Activated B cell treated with CpG ODN at 0.5 μM for 24 hours (primary cell): ENCODE measurements at regions of chr10 and their contacts with region 1.

Region 1: GRCh38 chr10:71319042-71319799 is at the start of gene SLC29A3:
- DNase-seq: peak; percentile 72
- ATAC-seq: peak; percentile 90
- H3K4me3 Mint-ChIP-seq: peak within 1 kb of the TSS; percentile 96
- H3K27ac Mint-ChIP-seq: peak within 1 kb of the TSS; percentile 80
- H3K4me1 Mint-ChIP-seq: peaks cover 13% of the 10 kb centered on the region
- H3K27me3 Mint-ChIP-seq: no peaks in the 10 kb centered on the region
- CTCF ChIP-seq: no peak
- total RNA-seq, gene SLC29A3: 3.1 and 4.3 TPM in 2 replicates

Region 2: GRCh38 chr10:71359364-71360046 is 40.3 kb after region 1 on chr10:
- CTCF ChIA-PET with region 1: no interaction called
- POLR2A ChIA-PET with region 1: interaction called, 4 read pairs
- intact Hi-C with region 1: loop called (anchors 5 kb)
- DNase-seq: no peak
- ATAC-seq: peak; percentile 80
- H3K4me3 Mint-ChIP-seq: no peak overlapping the region
- H3K27ac Mint-ChIP-seq: peak overlapping the region; percentile 72
- H3K4me1 Mint-ChIP-seq: peaks cover 24% of the 10 kb centered on the region
- H3K27me3 Mint-ChIP-seq: no peaks in the 10 kb centered on the region
- CTCF ChIP-seq: no peak

Region 3: GRCh38 chr10:71378336-71379117 is 59.3 kb after region 1 on chr10:
- CTCF ChIA-PET with region 1: interaction called, 41 read pairs
- POLR2A ChIA-PET with region 1: interaction called, 34 read pairs
- intact Hi-C with region 1: loop called (anchors 1 kb)
- DNase-seq: no peak
- ATAC-seq: peak; percentile 20
- H3K4me3 Mint-ChIP-seq: peak overlapping the region; percentile 24
- H3K27ac Mint-ChIP-seq: peak overlapping the region; percentile 67
- H3K4me1 Mint-ChIP-seq: peaks cover 40% of the 10 kb centered on the region
- H3K27me3 Mint-ChIP-seq: no peaks in the 10 kb centered on the region
- CTCF ChIP-seq: no peak

Region 4: DNA sequence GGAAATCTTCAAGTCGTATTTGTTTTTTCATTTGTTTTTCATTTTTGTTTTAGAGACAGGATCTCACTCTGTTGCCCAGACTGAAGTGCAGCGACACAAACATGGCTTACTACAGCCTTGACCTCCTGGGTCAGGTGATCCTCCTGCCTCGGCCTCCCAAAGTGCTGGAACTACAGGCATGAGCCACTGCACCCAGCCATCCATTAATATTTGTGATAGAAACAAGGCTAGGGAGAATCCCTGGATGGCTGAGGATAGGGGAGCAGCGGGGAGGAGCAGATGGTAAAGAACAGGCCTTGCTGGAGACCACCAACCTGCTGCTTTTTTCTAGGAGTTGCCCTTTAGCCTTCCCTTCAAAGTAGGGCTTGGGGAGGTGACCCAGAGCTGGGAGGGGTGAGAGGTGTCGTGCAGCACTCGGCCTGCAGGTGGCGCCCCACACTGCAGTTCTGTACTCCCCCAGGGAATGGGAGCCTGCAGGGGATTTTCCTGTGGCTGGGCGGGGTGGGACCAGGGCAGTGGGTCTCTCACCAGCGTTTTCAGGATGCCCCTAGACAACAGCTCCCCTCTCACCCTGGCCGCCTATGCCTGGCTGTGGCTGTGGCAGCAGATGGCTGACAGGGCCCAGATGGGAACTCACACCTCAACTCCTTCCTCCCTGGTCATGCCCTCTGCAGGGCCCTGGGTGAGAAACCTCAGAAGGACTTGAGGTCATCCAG is 64.9 kb after region 1 on chr10:
- CTCF ChIA-PET with region 1: interaction called, 41 read pairs
- POLR2A ChIA-PET with region 1: interaction called, 7 read pairs
- intact Hi-C with region 1: loop called (anchors 2 kb)
- DNase-seq: peak; percentile 82
- ATAC-seq: peak; percentile 100
- H3K4me3 Mint-ChIP-seq: no peak overlapping the region
- H3K27ac Mint-ChIP-seq: no peak overlapping the region
- H3K4me1 Mint-ChIP-seq: peaks cover 7% of the 10 kb centered on the region
- H3K27me3 Mint-ChIP-seq: peaks cover 3% of the 10 kb centered on the region
- CTCF ChIP-seq: no peak

Region 5: DNA sequence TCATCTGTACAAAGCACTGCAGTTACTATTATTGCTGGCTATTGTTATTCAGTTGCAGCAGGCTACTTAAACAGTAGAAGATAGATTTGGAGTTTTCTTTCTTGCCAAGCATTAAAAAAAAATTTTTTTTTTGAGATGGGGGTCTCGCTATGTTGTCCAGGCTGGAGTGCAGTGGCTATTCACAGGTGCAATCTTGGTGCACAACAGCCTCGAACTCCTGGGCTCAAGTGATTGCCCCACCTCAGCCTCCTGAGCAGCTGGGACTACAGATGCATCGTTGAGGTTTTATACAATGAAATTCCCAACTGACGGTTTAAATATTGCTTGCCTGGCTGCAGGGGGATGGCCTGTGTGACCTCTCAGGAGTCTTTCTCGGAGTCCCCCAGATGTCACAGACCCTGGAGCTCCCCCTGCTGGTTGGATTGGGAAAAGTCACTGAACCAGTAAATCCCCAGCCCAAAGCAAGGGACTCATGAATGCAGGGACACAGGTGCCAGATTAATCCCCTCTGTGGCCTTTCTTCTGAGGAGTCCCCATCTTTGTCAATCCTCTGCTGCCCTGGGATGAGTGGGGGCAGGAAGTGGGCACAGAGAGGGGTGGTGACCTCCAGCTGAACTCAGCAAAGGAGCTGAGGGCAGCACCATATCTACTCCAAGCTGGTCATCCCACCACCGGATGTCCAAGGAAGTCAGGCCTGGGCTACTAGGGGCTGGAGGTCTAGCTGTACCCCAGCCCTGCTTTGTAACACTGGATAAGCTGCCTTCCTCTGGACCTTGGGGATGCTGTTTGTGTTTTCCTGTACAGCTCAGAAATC is 250.8 kb after region 1 on chr10:
- CTCF ChIA-PET with region 1: interaction called, 109 read pairs
- POLR2A ChIA-PET with region 1: interaction called, 3 read pairs
- intact Hi-C with region 1: loop called (anchors 1 kb)
- DNase-seq: peak; percentile 62
- ATAC-seq: peak; percentile 67
- H3K4me3 Mint-ChIP-seq: no peak overlapping the region
- H3K27ac Mint-ChIP-seq: no peak overlapping the region
- H3K4me1 Mint-ChIP-seq: no peaks in the 10 kb centered on the region
- H3K27me3 Mint-ChIP-seq: peaks cover 5% of the 10 kb centered on the region
- CTCF ChIP-seq: no peak

Region 6: DNA sequence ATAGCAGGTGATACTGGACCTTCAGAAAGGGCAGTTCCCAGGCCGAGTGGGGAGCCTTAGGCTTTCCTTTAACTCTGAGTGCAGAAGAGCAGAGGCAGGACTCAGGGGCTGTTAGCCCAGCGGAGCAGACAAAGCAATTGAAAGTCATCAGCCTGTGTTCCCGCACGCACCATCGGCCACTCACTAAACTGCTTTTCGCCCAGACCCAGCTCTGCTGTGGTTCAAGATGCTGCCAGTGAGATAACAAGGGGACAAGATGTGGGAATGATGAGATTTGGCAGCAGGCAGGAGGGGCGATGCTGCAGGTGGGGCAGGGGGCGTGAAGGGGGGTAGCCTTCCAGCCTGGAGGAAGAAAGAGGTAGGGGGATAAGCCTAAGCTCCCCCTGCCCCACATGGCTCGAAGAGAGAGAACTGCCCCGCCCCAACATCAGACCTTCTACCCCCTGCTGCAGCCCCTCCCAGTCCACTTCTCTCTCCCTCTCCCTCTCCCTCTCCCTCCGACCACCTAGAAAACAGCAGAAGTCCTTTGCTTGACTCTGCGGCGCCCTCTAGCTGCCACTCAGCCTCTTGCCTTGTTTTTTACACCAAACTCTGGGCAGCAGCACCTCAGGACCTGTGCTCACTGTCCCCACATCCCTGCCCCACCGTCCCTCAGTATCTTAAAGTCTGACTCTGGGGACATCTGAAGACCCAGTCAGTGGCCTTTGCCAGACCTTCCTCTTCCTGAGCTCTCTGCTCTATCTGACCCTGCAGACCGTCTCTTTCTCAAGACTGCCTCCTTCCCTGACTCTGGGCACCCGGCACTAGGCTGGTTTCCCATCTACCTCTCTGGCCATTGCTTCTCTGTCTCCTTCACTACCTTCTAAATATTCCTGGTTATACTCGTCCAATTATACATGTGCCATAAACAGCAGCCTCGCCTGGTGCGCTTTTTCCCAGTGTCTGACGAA is 289.9 kb after region 1 on chr10:
- CTCF ChIA-PET with region 1: interaction called, 26 read pairs
- POLR2A ChIA-PET with region 1: interaction called, 3 read pairs
- intact Hi-C with region 1: loop called (anchors 1 kb)
- DNase-seq: peak; percentile 48
- ATAC-seq: no peak
- H3K4me3 Mint-ChIP-seq: no peak overlapping the region
- H3K27ac Mint-ChIP-seq: no peak overlapping the region
- H3K4me1 Mint-ChIP-seq: no peaks in the 10 kb centered on the region
- H3K27me3 Mint-ChIP-seq: peaks cover 3% of the 10 kb centered on the region
- CTCF ChIP-seq: no peak